AG04449 (cell line): ENCODE measurements at regions of chr2 and their contacts with region 1.

Region 1: GRCh38 chr2:237572021-237572741 is 5.8 kb downstream of the PRLH start:
- DNase-seq: peak; percentile 59
- H3K4me3 ChIP-seq: 0 out of 2 replicates have a peak overlapping the region, but pooled peaks have one; percentile 6
- CTCF ChIP-seq: peak; percentile 100

Region 2: GRCh38 chr2:237085248-237086221 is 486.6 kb before region 1 on chr2 and contains the start of gene COPS8:
- CTCF ChIA-PET with region 1: interaction called, 85 read pairs
- POLR2A ChIA-PET with region 1: no interaction called
- DNase-seq: no peak
- H3K4me3 ChIP-seq: peak within 1 kb of the TSS; percentile 83
- CTCF ChIP-seq: peak; percentile 25

Region 3: DNA sequence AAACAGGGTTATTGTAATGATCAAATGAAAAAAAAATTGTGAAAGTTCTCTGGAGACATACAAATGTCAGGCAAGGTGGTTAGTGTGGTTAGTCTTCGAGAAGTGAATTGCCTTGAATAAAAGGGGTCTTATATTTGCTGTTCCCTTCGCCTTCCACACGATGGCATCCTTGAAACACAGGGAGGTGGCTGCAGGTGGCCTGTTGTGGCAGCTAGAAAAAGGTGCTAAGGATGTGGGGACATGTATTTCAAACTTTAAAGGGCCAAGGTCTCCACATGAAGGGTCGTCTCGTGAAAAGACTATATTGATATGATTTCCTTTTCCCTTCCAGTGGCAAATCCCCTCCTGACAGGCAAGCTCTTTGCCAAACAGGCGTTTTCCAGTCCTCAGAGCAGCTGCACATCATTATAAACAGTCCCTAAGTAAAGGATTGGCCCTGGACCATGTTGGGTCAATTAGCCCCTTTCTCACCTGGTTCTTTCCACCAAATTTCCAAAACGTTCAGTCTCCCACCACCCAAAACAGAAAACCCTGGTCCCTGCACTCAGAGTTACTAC is 418.0 kb before region 1 on chr2:
- CTCF ChIA-PET with region 1: interaction called, 43 read pairs
- POLR2A ChIA-PET with region 1: no interaction called
- DNase-seq: no peak
- H3K4me3 ChIP-seq: no peak overlapping the region
- CTCF ChIP-seq: peak; percentile 71

Region 4: GRCh38 chr2:237421542-237422116 is 150.6 kb before region 1 on chr2:
- CTCF ChIA-PET with region 1: interaction called, 87 read pairs
- POLR2A ChIA-PET with region 1: no interaction called
- DNase-seq: no peak
- H3K4me3 ChIP-seq: no peak overlapping the region
- CTCF ChIP-seq: peak; percentile 91

Region 5: GRCh38 chr2:237483040-237483721 is 89.0 kb before region 1 on chr2:
- CTCF ChIA-PET with region 1: interaction called, 19 read pairs
- POLR2A ChIA-PET with region 1: no interaction called
- DNase-seq: peak; percentile 57
- H3K4me3 ChIP-seq: no peak overlapping the region
- CTCF ChIP-seq: peak; percentile 59

Region 6: GRCh38 chr2:237529452-237530402 is 42.5 kb before region 1 on chr2:
- CTCF ChIA-PET with region 1: interaction called, 27 read pairs
- POLR2A ChIA-PET with region 1: interaction called, 5 read pairs
- DNase-seq: no peak
- H3K4me3 ChIP-seq: no peak overlapping the region
- CTCF ChIP-seq: no peak

Region 7: DNA sequence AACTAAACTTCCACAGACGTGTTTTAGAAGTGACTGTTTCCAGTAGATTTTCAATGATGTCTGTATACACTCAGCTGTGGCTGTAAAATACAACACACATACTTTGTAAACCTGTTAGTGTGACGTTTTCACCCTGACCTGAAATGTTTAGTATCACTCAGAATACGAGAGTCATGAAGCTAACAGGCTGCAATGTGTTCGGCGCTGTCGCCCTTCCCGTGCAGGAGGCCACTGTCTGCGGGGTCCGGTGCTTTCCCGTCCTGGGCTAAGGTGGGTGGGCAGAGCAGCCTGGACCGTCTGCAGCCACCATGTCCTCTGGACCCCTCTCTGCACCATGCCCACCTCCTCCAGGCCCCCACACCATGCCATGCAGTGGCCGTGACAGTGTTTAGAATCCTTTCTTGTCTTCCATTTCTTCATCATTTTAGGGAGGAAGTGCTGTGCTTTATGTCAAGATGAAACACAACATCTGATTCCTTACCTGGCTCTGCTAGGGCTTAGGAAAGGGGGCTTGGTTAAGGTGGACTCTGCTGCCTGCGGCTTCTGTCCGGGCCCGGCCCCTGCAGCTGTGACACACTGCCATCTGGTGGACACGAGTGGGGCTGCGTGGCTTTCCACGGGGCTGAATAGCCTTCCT is 172.6 kb after region 1 on chr2:
- CTCF ChIA-PET with region 1: interaction called, 197 read pairs
- POLR2A ChIA-PET with region 1: no interaction called
- DNase-seq: no peak
- H3K4me3 ChIP-seq: no peak overlapping the region
- CTCF ChIP-seq: peak; percentile 94